ENCODE measurements at regions of chrX and their contacts with region 1.

Region 1: GRCh38 chrX:76971393-76972376 is 475.5 kb upstream of the FGF16 start:
- DNase-seq: no peak
- ATAC-seq: no peak
- H3K4me3 ChIP-seq: no peak overlapping the region
- H3K27ac ChIP-seq: no peak overlapping the region
- H3K4me1 ChIP-seq: no peaks in the 10 kb centered on the region
- H3K27me3 ChIP-seq: no peaks in the 10 kb centered on the region
- CTCF ChIP-seq: no peak
- POLR2A ChIP-seq: no peak

Region 2: DNA sequence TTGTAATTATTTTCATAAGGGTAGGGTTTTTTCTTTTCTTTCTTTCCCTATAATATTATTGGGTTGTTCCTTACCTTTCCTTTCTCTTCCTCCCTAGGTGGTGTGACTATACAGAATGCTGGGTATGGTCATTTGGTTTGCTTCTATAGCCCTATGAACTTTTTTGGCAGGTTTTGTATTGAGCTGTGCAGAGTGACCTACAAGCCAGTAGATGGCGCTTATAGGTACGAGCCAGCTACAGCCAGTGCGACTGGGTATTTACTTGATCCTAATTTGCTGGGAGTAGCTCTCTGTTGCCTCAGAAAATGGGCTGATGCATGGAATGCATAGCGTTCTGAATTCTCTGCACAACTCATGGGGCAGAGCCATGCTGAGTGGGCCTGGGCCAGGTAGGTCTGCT is 120.8 kb before region 1 on chrX:
- in situ Hi-C with region 1: loop called in 1 of 4 experiments (anchors 25 kb)
- intact Hi-C with region 1: no loop called
- DNase-seq: no peak
- ATAC-seq: no peak
- H3K4me3 ChIP-seq: no peak overlapping the region
- H3K27ac ChIP-seq: no peak overlapping the region
- H3K4me1 ChIP-seq: no peaks in the 10 kb centered on the region
- H3K27me3 ChIP-seq: no peaks in the 10 kb centered on the region
- CTCF ChIP-seq: no peak
- POLR2A ChIP-seq: no peak

Measured in gastrocnemius medialis (tissue), 4 donors.